ENCODE measurements at regions of chr16 and their contacts with region 1.

Region 1: DNA sequence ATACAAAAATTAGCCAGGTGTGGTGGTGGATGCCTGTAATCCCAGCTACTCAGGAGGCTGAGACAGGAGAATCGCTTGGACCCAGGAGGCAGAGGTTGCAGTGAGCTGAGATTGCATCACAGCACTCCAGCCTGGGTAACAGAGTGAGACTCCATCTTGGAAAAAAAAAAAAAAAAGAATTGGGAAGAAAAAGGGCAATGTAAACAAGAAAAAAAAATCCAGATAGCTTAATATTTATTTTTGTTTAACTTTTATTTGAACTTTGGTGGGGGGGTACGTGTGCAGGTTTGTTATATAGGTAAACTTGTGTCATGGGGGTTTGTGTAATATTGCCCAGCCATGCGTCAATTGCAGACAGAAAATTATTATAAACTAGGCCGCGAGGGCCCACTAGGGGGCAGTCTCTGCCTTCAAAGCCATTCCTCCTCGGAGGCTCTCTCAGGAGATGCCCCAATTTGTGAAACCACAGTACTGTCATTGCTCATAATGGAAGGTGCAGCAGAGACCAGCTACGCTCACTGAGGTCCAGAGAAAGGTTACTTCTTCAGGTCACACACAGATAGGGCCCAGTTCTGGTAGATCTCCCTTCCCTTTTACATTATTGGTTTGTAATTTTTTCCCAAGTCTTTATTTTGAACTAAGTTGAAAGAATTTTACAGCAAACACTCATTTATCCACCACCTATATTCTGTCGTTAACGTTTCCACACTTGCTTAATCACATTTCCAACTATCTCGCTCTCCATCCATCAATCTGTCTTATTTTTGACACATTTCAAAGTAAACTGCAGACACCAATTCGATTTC is 206.2 kb downstream of the PRKCB start:
- DNase-seq: peak; percentile 72
- H3K4me3 ChIP-seq: no peak overlapping the region
- H3K27ac ChIP-seq: no peak overlapping the region
- H3K4me1 ChIP-seq: no peaks in the 10 kb centered on the region
- H3K27me3 ChIP-seq: no peaks in the 10 kb centered on the region
- CTCF ChIP-seq: peak; percentile 56 to 80 (median 69)
- EP300 ChIP-seq: no peak
- POLR2A ChIP-seq: no peak

Region 2: DNA sequence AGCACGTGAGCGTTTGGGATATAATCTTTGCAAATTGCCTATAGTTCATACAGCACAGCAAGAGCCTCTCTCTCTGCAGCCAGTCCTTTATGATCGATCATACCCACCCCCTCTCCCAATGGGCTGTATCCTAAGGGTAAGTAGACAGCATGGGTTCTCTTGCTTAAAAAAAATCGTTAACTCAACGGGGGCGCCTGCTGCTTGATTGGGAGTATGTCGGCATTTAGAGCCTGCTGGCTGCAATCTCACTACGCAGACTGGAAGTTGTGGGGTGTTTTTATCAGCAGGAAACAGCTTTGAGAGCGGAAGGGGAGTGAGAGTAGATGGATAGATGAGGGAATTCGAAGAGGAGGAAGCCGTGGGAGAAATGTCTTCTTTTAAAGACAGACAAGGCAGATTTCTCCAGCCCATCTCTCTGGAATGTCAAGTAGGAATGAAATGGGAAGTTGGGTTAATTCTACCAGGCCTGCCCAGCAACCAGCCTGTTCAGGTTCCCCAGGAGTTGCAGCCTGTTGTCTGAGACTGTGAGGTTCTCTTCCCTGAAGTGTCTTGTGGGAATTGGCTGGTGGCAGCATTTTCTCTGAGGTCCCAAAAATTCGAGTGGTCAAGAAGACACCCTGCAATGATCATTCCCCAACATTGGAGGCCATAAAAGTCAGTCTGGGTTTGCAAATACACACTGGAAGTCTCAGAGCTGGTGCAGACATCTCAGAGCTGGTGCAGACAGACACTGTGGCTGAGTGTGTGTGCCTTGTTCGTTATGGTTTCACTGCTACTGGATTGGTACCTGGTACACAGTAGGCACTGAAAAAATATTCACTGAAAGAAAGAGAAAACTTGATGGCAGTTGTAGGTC is 140.6 kb before region 1 on chr16:
- in situ Hi-C with region 1: no loop called
- intact Hi-C with region 1: no loop called
- DNase-seq: no peak
- H3K4me3 ChIP-seq: no peak overlapping the region
- H3K27ac ChIP-seq: no peak overlapping the region
- H3K4me1 ChIP-seq: no peaks in the 10 kb centered on the region
- H3K27me3 ChIP-seq: no peaks in the 10 kb centered on the region
- CTCF ChIP-seq: no peak
- EP300 ChIP-seq: no peak
- POLR2A ChIP-seq: no peak

Region 3: DNA sequence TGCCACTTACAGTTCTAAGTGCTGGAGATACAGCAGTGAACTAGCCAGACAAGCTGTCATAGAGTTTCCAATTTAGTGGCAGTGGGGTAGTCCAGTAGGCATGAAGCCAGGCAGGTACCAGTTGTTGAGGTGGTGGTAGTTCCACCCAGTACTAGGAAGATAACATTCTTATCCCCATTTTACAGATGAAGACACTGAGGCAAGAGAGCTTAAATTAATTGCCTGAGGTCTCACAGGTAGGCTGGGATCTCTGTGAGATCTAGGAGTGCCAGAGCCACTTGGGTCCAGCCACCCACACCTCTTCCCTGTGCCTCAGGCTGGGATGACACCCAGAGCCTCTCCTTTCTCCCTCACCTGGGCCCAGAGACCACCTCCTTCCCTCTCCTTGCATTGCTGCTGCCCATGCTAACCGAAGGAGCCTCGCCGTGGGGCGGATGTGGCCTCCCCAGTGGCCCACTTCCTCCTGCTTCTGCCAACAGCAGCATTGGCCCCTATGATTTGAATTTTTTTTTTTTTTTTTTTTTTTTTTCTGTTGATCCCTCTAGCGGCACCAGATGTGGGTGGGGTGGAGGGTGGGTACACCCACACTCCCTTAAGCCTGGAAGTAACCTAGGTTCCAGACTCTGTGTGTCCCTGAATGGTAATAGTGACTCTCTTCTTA is 92.3 kb before region 1 on chr16:
- in situ Hi-C with region 1: loop called in 1 of 4 experiments (anchors 25 kb)
- intact Hi-C with region 1: no loop called
- DNase-seq: peak; percentile 67
- H3K4me3 ChIP-seq: no peak overlapping the region
- H3K27ac ChIP-seq: peak overlapping the region; percentile 7 to 48 (median 33)
- H3K4me1 ChIP-seq: peaks cover 0 to 28% (median 4%) of the 10 kb centered on the region in 4 donors
- H3K27me3 ChIP-seq: no peaks in the 10 kb centered on the region
- CTCF ChIP-seq: no peak
- EP300 ChIP-seq: no peak
- POLR2A ChIP-seq: no peak

Region 4: DNA sequence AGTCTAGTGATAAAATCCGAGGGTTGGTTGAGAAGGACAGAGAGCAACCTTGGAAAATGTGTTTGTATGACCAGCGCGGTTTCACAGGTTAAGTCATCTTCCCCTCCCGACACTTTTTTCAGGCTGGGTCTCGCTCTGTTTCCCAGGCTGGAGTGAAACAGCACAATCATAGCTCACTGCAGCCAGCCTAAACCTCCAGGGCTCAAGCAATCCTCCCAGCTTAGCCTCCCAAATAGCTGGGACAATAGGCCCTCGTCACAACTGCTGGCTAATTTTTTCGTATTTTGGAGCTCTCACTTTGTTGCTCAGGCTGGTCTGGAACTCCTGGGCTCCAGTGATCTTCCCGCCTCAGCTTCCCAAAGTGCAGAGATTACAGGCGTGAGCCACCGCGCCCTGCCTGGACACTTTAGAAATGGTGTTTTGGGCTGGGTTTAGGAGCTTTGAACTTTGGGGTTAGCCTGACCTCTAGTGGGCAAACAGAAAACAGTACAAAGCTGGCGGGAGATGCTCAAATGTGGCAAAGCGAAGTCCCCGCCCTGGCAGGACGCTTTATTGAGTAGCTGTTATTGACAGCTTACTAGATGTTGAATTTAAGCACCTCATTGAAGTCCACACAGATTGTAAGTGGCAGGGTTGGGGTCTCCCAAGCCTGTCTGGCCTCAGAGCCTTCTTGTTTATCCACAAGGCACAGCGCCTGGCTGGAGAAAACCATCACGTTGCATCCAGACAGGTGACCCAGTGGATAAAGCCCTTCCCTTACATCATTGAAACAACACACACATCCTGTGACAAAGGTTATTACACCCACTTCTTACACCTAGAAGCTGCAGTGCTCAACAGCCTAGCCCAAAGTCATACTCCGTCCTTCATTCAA is 462.7 kb after region 1 on chr16:
- in situ Hi-C with region 1: loop called (anchors 10 kb)
- intact Hi-C with region 1: loop called (anchors 5 kb)
- DNase-seq: peak; percentile 38
- H3K4me3 ChIP-seq: no peak overlapping the region
- H3K27ac ChIP-seq: no peak overlapping the region
- H3K4me1 ChIP-seq: no peaks in the 10 kb centered on the region
- H3K27me3 ChIP-seq: no peaks in the 10 kb centered on the region
- CTCF ChIP-seq: peak; percentile 61 to 72 (median 65)
- EP300 ChIP-seq: no peak
- POLR2A ChIP-seq: no peak